A549 (cell line): ENCODE measurements at regions of chr14 and their contacts with region 1.

Region 1: GRCh38 chr14:34629657-34630529 is at the start of gene SNX6:
- DNase-seq: peak; percentile 78 to 94
- ATAC-seq: peak; percentile 98 to 99
- H3K4me3 ChIP-seq: peak within 1 kb of the TSS; percentile 79
- H3K27ac ChIP-seq: peak within 1 kb of the TSS; percentile 94 to 98
- H3K4me1 ChIP-seq: peaks cover 25% of the 10 kb centered on the region; the same call in 2 of the 3 replicates
- CTCF ChIP-seq: no peak
- EP300 ChIP-seq: no peak
- POLR2A ChIP-seq: peak; percentile 62
- RAD21 ChIP-seq: no peak; a peak in 1 of 5 replicates
- polyA plus RNA-seq, gene SNX6: 99.4 and 149 TPM in 2 replicates

Region 2: GRCh38 chr14:34650421-34651216 is 20.7 kb after region 1 on chr14:
- CTCF ChIA-PET with region 1: interaction called, 3 read pairs
- POLR2A ChIA-PET with region 1: interaction called, 12 read pairs
- DNase-seq: peak; percentile 85 to 92
- ATAC-seq: peak; percentile 95 to 99
- H3K4me3 ChIP-seq: no peak overlapping the region
- H3K27ac ChIP-seq: peak overlapping the region; percentile 84 to 90
- H3K4me1 ChIP-seq: peaks cover 48% of the 10 kb centered on the region
- CTCF ChIP-seq: no peak
- EP300 ChIP-seq: peak; percentile 11 to 67; a peak in 2 of 5 replicates
- POLR2A ChIP-seq: no peak
- RAD21 ChIP-seq: peak in 1 of 2 experiments; percentile 28; a peak in 3 of 5 replicates

Region 3: GRCh38 chr14:34775922-34776321 is 146.0 kb after region 1 on chr14:
- CTCF ChIA-PET with region 1: no interaction called
- POLR2A ChIA-PET with region 1: no interaction called
- DNase-seq: no peak
- ATAC-seq: no peak
- H3K4me3 ChIP-seq: no peak overlapping the region
- H3K27ac ChIP-seq: no peak overlapping the region
- H3K4me1 ChIP-seq: no peaks in the 10 kb centered on the region
- CTCF ChIP-seq: no peak
- EP300 ChIP-seq: no peak
- POLR2A ChIP-seq: no peak
- RAD21 ChIP-seq: no peak